CD4-positive, alpha-beta T cell (primary cell): ENCODE measurements at regions of chr1 and their contacts with region 1.

Region 1: DNA sequence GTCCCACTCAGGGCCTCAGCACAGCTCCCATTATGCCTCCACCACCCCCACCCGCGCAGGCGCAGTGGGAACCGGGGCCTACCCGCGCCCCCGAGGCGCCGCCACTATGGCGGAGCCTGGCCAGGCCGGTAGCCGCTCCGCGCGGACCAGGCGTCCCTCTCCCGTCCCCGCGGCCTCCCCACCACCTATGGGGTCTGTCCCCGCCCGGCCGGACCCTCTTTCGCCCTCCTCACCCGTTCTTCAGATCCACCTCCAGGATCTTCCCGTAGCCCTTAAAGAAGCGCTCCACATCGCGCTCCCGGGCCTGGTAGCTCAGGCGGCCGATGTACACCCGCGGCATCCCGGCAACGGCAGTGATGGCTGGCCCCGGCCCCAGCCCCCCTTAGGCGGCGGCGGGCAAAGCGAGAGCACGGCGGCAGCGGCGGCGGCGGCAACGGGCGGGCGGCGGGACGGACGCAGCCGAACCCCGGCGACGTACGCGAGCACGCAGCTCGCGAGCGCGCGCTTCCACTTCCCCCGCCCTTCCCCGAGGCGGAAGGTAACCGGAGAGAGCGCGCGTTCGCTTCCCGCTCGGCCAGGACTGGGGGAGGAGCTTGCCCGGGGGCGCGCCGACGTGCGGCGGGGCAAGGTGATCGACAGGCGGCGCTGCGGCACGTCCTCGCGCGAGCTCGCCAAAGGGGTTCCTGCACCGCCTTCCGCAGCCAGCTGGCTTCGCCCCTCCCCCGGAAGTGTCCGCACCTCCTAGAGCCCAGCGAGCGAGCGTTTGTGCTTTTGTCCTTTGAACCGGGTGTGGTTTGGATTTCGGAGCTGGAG is at the start of gene SRSF4:
- DNase-seq: peak; percentile 97 to 99 (median 99)
- ATAC-seq: peak; percentile 89
- H3K4me3 ChIP-seq: peak within 1 kb of the TSS; percentile 79
- H3K4me3 Mint-ChIP-seq: peak within 1 kb of the TSS; percentile 97
- H3K27ac ChIP-seq: peak within 1 kb of the TSS; percentile 97 to 99
- H3K27ac Mint-ChIP-seq: peak within 1 kb of the TSS; percentile 93
- H3K4me1 ChIP-seq: peaks cover 39% of the 10 kb centered on the region
- H3K4me1 Mint-ChIP-seq: peaks cover 50% of the 10 kb centered on the region
- H3K27me3 ChIP-seq: no peaks in the 10 kb centered on the region
- H3K27me3 Mint-ChIP-seq: no peaks in the 10 kb centered on the region
- CTCF ChIP-seq: peak; percentile 72
- total RNA-seq, gene SRSF4: 89.2 to 93.4 TPM

Region 2: GRCh38 chr1:28518000-28518744 is 663.4 kb before region 1 on chr1:
- CTCF ChIA-PET with region 1: interaction called, 3 read pairs
- POLR2A ChIA-PET with region 1: no interaction called
- intact Hi-C with region 1: loop called in 1 of 2 experiments (anchors 5 kb)
- DNase-seq: peak; percentile 80 to 93 (median 86)
- ATAC-seq: peak; percentile 90
- H3K4me3 ChIP-seq: peak overlapping the region; percentile 66
- H3K4me3 Mint-ChIP-seq: peak overlapping the region; percentile 91
- H3K27ac ChIP-seq: peak overlapping the region; percentile 23 to 29
- H3K27ac Mint-ChIP-seq: peak overlapping the region; percentile 83
- H3K4me1 ChIP-seq: peaks cover 24% of the 10 kb centered on the region
- H3K4me1 Mint-ChIP-seq: peaks cover 33% of the 10 kb centered on the region
- H3K27me3 ChIP-seq: no peaks in the 10 kb centered on the region
- H3K27me3 Mint-ChIP-seq: no peaks in the 10 kb centered on the region
- CTCF ChIP-seq: peak; percentile 94

Region 3: DNA sequence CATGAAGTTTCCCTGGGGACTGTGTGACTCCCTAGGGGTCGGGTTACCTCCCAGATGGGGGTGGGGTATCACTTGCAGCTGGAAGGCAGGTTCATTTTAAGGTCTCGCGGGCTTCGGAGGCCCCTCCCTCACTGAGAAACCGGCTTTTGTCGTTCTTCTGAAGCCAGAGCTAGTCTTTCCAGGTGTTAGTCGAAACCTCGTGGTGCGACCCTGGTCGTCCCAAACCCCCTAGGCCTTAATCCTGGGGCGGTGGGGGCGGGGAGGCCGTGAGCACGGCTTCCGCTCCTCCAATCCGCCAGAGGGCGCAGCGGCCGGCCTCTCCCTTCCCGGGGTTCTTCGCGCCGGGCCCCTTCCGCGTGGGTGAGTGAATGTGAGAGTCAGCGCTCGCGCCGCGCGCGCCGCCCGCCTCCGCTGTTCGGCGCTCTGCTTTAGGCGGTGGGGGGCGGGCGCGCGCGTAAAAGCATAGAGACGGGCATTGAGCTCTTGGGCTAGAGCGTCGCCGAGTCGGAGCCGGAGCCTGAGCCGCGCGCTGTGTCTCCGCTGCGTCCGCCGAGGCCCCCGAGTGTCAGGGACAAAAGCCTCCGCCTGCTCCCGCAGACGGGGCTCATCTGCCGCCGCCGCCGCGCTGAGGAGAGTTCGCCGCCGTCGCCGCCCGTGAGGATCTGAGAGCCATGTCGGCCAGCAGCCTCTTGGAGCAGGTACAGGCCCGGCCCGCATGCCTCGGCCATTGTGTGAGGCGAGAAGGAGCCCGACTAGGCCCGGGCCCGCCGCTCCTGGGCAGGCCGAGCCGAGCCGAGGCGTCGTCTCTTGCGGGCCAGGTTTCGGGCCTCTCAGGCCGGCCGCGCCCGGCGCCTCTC is 444.9 kb before region 1 on chr1 and contains the start of gene YTHDF2:
- CTCF ChIA-PET with region 1: interaction called, 12 read pairs
- POLR2A ChIA-PET with region 1: interaction called, 45 read pairs
- intact Hi-C with region 1: loop called in 1 of 2 experiments (anchors 2 kb)
- DNase-seq: peak; percentile 97 to 99 (median 98)
- ATAC-seq: peak; percentile 91
- H3K4me3 ChIP-seq: peak within 1 kb of the TSS; percentile 95
- H3K4me3 Mint-ChIP-seq: peak within 1 kb of the TSS; percentile 98
- H3K27ac ChIP-seq: peak within 1 kb of the TSS; percentile 82 to 89
- H3K27ac Mint-ChIP-seq: peak within 1 kb of the TSS; percentile 92
- H3K4me1 ChIP-seq: peaks cover 32% of the 10 kb centered on the region
- H3K4me1 Mint-ChIP-seq: peaks cover 44% of the 10 kb centered on the region
- H3K27me3 ChIP-seq: no peaks in the 10 kb centered on the region
- H3K27me3 Mint-ChIP-seq: no peaks in the 10 kb centered on the region
- CTCF ChIP-seq: peak; percentile 94
- total RNA-seq, gene YTHDF2: 85.0 to 100 TPM

Region 4: DNA sequence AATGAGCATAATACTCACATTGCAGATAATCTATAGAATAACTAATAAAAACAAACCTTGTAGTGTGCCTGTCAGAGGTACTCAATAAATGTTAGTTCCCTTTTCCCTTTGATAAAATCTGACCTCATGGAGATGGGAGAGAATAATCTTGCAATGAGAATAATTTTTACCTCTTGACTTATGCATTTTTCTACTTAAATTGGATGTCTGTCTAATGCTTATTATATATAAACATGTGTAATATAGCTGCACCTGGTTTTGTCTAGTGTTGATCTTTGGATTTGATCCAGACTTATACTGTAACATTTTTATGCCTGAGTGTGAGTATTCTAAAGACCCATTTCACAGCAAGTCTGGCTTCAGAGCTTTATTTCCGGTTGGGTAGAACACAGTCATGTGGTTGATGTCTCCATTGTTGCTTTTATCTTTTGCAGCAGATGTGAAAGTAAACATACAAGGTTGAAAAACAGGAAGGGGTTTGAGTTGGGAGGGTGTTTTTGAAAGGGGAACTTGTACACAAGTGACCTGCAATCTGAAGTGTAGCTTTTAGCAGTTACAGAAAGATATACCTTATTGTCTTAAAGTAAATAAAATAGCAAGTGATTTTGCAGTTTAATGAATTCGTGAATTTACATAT is 254.9 kb before region 1 on chr1:
- CTCF ChIA-PET with region 1: no interaction called
- POLR2A ChIA-PET with region 1: interaction called, 13 read pairs
- intact Hi-C with region 1: no loop called
- DNase-seq: peak in 8 of 14 experiments; percentile 28 to 92 (median 40)
- ATAC-seq: peak; percentile 82
- H3K4me3 ChIP-seq: peak overlapping the region; percentile 32
- H3K4me3 Mint-ChIP-seq: peak overlapping the region; percentile 78
- H3K27ac ChIP-seq: peak overlapping the region; percentile 71 to 75
- H3K27ac Mint-ChIP-seq: peak overlapping the region; percentile 85
- H3K4me1 ChIP-seq: peaks cover 68% of the 10 kb centered on the region
- H3K4me1 Mint-ChIP-seq: peaks cover 67% of the 10 kb centered on the region
- H3K27me3 ChIP-seq: no peaks in the 10 kb centered on the region
- H3K27me3 Mint-ChIP-seq: no peaks in the 10 kb centered on the region
- CTCF ChIP-seq: no peak

Region 5: GRCh38 chr1:29197585-29197924 is 15.9 kb after region 1 on chr1:
- CTCF ChIA-PET with region 1: interaction called, 26 read pairs
- POLR2A ChIA-PET with region 1: interaction called, 23 read pairs
- intact Hi-C with region 1: no loop called
- DNase-seq: peak in 12 of 14 experiments; percentile 4 to 67 (median 24)
- ATAC-seq: peak; percentile 94
- H3K4me3 ChIP-seq: no peak overlapping the region
- H3K4me3 Mint-ChIP-seq: no peak overlapping the region
- H3K27ac ChIP-seq: no peak overlapping the region
- H3K27ac Mint-ChIP-seq: no peak overlapping the region
- H3K4me1 ChIP-seq: no peaks in the 10 kb centered on the region
- H3K4me1 Mint-ChIP-seq: no peaks in the 10 kb centered on the region
- H3K27me3 ChIP-seq: no peaks in the 10 kb centered on the region
- H3K27me3 Mint-ChIP-seq: no peaks in the 10 kb centered on the region
- CTCF ChIP-seq: peak; percentile 18